Ascending aorta (tissue), 2 donors: ENCODE measurements at regions of chr12 and their contacts with region 1.

Region 1: DNA sequence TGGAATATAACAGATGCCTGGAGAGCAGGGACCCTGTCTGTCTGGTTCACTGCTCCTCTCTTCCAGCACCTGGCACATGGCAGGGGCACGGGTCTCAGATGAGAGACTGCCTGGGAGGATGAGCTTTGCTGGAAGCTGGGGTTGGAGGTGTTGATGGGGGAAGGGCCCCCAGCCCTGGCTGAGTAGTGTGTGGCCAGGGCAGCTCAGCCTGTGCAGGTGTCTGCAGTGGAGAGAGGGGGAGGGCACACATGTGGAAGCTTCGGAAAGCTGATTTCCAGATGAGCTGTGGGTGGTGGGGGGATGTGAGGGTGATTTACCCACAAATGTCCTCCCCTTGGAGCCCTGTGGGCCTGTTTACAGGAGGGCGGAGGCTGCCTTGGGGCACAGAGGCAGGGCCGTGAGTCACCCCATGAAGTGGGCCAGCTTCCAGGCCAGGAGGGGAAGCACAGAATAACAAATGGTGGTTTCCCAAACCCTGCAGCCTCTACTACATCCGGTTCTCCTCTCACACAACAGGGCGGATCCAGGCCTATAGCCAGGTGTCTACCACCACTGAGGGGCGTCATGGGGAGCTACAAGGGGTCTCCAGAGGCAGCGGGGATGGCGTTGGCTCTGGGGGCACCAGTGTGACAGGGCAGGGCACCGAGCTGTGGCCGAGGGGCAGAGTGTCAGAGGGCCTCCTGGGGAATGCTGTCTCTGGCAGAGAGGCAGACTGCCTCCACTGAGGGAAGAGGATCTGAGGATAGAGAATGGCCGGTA is 11.0 kb downstream of the KRT7 start:
- DNase-seq: peak; percentile 74 to 95
- H3K4me3 ChIP-seq: peak overlapping the region in 1 of 2 donors; percentile 31
- H3K27ac ChIP-seq: peak overlapping the region; percentile 88 to 90
- H3K4me1 ChIP-seq: peaks cover 17 to 52% of the 10 kb centered on the region in 2 donors
- H3K27me3 ChIP-seq: no peaks in the 10 kb centered on the region
- CTCF ChIP-seq: no peak

Region 2: DNA sequence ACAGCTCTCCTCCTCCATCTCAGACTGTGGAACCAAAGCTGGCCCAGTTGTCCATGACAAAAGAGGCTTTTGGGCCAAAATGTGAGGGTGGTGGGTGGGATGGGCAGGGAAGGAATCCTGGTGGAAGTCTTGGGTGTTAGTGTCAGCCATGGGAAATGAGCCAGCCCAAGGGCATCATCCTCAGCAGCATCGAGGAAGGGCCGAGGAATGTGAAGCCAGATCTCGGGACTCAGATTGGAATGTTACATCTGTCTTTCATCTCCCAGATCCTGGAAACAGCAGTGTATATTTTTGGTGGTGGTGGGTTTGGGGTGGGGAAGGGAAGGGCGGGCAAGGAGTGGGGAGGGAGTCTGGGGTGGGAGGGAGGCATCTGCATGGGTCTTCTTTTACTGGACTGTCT is 249.1 kb before region 1 on chr12:
- intact Hi-C with region 1: no loop called
- DNase-seq: no peak
- H3K4me3 ChIP-seq: no peak overlapping the region
- H3K27ac ChIP-seq: no peak overlapping the region
- H3K4me1 ChIP-seq: no peaks in the 10 kb centered on the region
- H3K27me3 ChIP-seq: no peaks in the 10 kb centered on the region
- CTCF ChIP-seq: no peak

Region 3: DNA sequence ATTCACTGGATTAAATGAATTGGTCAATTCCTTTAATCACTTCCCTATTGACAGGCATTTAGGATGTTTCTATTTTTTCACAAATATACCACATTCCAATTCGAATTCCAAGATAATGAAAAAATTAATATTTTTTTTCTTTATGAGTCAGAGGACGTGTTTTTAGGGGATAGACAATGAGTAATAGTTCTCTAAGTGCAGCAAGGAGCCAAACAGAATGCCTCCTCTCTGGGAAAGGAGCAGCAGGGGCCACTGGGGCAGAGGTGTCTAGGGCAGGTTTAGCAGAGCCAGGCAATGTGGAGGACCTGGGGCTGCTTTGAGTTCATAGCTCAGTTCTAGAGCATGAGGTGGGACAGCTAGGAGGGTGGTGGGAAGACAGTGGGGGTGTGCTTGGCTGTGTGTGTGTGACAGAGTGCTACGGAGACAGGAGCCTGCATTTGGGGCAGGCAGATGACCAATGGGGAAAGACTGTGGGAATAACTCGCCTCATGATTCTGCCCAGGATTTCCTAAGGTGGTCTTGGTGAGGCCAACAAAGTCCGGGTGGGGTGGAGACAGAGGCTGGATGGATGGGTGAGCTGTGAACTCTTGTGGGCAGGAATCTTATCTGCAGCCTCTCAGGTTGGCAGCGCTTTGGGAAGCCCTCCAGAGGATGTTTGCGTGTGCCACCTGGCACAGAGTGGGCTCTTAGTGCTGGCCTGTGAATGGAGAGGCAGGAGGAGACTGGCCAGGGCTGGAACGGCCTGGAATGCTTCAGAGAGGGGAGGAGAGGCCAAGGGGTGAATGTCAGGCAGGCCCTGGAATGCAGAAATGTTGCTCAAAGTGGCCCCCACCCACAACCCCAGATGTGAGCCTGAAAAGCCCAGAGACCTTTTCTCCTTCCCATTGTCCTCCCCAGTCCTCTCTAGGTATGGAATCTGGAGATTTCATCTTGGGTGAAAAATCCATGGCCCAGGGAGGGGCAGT is 13.4 kb before region 1 on chr12:
- intact Hi-C with region 1: loop called (anchors 2 kb)
- DNase-seq: peak in 1 of 2 donors; percentile 84
- H3K4me3 ChIP-seq: no peak overlapping the region
- H3K27ac ChIP-seq: peak overlapping the region; percentile 74 to 83
- H3K4me1 ChIP-seq: peaks cover 15 to 44% of the 10 kb centered on the region in 2 donors
- H3K27me3 ChIP-seq: peaks cover 4% of the 10 kb centered on the region
- CTCF ChIP-seq: no peak